Ovary (tissue), 10 donors: ENCODE measurements at regions of chr10 and their contacts with region 1.

Region 1: DNA sequence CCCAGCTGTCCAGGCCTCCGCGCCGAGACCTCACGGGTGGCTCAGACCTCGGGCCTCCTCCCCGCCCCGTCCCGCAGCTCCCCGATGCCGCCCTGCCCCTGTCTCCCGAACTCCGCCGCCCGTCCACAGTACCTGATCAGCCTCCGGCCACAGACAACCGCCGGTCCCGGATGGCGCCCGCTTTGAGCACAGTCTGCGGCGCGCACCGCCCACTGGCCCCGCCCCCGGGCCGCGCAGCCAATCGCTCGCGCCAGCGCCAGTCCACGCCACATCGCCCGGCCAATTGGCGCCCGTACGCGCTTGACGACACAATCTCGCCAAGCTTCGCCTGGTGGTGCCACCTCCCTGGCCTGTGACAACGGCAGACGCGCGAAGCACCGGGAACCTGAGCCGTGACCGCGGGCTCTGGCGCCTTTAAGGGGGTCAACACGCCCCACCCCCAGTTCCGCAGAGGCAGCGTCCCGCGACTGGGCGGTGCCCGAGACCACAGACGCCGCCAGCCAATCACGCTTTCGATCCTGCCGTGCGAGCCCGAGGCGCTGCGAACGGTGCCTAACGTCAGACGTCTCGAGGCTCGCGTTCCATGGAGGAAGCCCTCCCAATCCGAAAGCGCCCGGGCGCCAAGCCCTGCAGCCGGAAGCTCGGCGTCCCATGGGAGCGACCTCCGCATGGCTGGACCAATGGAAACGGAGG is at the start of gene IDI1:
- DNase-seq: peak; percentile 96 to 98 (median 97)
- H3K4me3 ChIP-seq: peak within 1 kb of the TSS; percentile 94
- H3K27ac ChIP-seq: peak within 1 kb of the TSS; percentile 93 to 100
- H3K4me1 ChIP-seq: peaks cover 10% of the 10 kb centered on the region
- H3K27me3 ChIP-seq: no peaks in the 10 kb centered on the region
- CTCF ChIP-seq: peak in 1 of 3 donors; percentile 13
- EP300 ChIP-seq: peak; percentile 26
- POLR2A ChIP-seq: peak; percentile 85
- total RNA-seq, gene IDI1: 17.3 to 99.0 (median 24.4) TPM

Region 2: DNA sequence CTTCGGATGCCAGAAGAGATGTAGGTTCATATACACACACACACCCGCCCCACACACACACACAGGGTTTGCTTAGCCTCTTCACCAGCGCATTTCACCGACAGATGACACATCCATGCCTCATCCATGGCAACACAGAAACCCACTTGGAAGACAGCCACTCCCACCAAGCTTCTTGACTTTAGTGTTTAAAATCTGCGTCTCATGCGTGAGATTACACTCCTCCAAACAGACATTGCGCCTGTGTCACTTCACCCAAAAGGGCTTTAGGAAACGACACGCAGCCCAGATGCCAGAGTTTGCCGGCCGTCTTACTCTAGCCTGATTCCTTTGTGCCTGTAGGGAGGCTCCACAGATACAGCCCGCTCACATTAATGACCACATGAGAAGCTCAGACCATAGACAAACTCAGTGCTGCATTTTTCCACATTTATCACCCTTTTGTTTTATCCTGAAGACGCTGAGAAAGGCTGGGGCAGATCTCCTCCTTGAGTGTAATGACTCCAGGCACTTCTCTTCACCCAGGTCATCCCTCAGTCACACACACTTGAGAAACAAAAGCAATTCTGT is 433.2 kb before region 1 on chr10:
- intact Hi-C with region 1: no loop called
- DNase-seq: no peak
- H3K4me3 ChIP-seq: no peak overlapping the region
- H3K27ac ChIP-seq: no peak overlapping the region
- H3K4me1 ChIP-seq: peaks cover 9% of the 10 kb centered on the region
- H3K27me3 ChIP-seq: no peaks in the 10 kb centered on the region
- CTCF ChIP-seq: no peak
- EP300 ChIP-seq: no peak
- POLR2A ChIP-seq: no peak

Region 3: GRCh38 chr10:987870-988666 is 60.8 kb before region 1 on chr10 and contains the start of gene GTPBP4:
- intact Hi-C with region 1: loop called in 1 of 4 experiments (anchors 5 kb)
- DNase-seq: peak; percentile 98 to 99 (median 99)
- H3K4me3 ChIP-seq: peak within 1 kb of the TSS; percentile 86
- H3K27ac ChIP-seq: peak within 1 kb of the TSS; percentile 43 to 89
- H3K4me1 ChIP-seq: peaks cover 12% of the 10 kb centered on the region
- H3K27me3 ChIP-seq: no peaks in the 10 kb centered on the region
- CTCF ChIP-seq: no peak
- EP300 ChIP-seq: peak; percentile 19
- POLR2A ChIP-seq: peak; percentile 62
- total RNA-seq, gene GTPBP4: 17.9 to 44.7 (median 30.5) TPM

Region 4: GRCh38 chr10:1074748-1075308 is 25.9 kb after region 1 on chr10:
- intact Hi-C with region 1: no loop called
- DNase-seq: no peak
- H3K4me3 ChIP-seq: no peak overlapping the region
- H3K27ac ChIP-seq: no peak overlapping the region
- H3K4me1 ChIP-seq: peaks cover 2% of the 10 kb centered on the region
- H3K27me3 ChIP-seq: no peaks in the 10 kb centered on the region
- CTCF ChIP-seq: no peak
- EP300 ChIP-seq: no peak
- POLR2A ChIP-seq: no peak